Right cardiac atrium (tissue), 5 donors: ENCODE measurements at regions of chr3 and their contacts with region 1.

Region 1: DNA sequence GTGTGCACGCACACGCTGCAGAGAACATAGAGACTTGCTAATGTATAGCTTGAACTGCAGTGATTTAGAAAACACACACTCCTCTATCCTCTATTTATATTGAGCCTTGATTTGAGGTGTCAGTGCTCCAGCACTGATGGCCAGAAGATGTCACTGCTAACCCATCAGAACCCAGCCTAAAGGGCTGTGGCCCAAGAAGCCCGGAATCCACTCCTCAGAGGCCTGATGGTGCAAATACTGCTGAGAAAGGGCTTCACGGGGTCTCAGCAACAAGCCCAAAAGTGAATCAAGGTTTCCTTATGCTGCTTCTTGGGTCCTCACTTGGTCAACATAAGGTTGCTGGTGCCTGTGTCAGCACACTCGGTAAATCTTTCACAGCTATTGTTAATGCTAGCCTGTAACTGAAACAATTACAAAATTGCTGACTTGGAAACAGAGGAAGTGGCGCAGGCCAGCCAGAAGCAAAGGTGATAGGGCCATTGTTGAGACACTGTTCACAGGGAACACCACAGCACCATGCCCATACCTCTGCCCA is 60.3 kb downstream of the HEG1 start:
- DNase-seq: peak; percentile 44 to 74 (median 68)
- ATAC-seq: peak; percentile 43 to 74
- H3K4me3 ChIP-seq: no peak overlapping the region
- H3K27ac ChIP-seq: peak overlapping the region; percentile 71
- H3K4me1 ChIP-seq: peaks cover 21% of the 10 kb centered on the region
- H3K27me3 ChIP-seq: no peaks in the 10 kb centered on the region

Region 2: DNA sequence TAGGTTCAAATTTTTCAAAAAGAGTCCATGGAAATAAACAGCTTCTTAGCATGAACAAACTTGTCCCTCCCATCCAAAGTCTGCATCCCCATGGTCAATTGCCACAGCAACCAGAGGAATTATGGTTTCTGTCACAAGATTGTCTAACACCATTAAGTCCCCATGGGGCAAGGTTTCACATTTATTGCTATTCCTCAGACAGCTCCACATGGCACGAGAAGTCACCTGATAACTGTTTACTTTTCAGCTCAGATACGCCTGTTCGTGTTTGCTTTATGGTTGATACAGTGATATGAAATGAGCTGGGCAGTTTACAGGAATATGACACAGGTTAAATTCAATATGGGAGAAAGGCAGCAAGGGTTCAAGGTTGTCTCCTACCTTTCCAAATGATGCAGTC is 23.1 kb before region 1 on chr3:
- intact Hi-C with region 1: no loop called
- DNase-seq: no peak
- ATAC-seq: no peak
- H3K4me3 ChIP-seq: no peak overlapping the region
- H3K27ac ChIP-seq: no peak overlapping the region
- H3K4me1 ChIP-seq: no peaks in the 10 kb centered on the region
- H3K27me3 ChIP-seq: no peaks in the 10 kb centered on the region

Region 3: GRCh38 chr3:125042725-125043406 is 47.3 kb after region 1 on chr3:
- intact Hi-C with region 1: loop called in 1 of 4 experiments (anchors 2 kb)
- DNase-seq: peak; percentile 66 to 83 (median 82)
- ATAC-seq: peak; percentile 67 to 77
- H3K4me3 ChIP-seq: no peak overlapping the region
- H3K27ac ChIP-seq: peak overlapping the region; percentile 94
- H3K4me1 ChIP-seq: peaks cover 56% of the 10 kb centered on the region
- H3K27me3 ChIP-seq: no peaks in the 10 kb centered on the region

Region 4: GRCh38 chr3:125165189-125165947 is 169.8 kb after region 1 on chr3:
- intact Hi-C with region 1: loop called (anchors 5 to 10 kb)
- DNase-seq: peak in 2 of 3 donors; percentile 81
- ATAC-seq: peak; percentile 79 to 83
- H3K4me3 ChIP-seq: no peak overlapping the region
- H3K27ac ChIP-seq: no peak overlapping the region
- H3K4me1 ChIP-seq: peaks cover 6% of the 10 kb centered on the region
- H3K27me3 ChIP-seq: no peaks in the 10 kb centered on the region

Region 5: DNA sequence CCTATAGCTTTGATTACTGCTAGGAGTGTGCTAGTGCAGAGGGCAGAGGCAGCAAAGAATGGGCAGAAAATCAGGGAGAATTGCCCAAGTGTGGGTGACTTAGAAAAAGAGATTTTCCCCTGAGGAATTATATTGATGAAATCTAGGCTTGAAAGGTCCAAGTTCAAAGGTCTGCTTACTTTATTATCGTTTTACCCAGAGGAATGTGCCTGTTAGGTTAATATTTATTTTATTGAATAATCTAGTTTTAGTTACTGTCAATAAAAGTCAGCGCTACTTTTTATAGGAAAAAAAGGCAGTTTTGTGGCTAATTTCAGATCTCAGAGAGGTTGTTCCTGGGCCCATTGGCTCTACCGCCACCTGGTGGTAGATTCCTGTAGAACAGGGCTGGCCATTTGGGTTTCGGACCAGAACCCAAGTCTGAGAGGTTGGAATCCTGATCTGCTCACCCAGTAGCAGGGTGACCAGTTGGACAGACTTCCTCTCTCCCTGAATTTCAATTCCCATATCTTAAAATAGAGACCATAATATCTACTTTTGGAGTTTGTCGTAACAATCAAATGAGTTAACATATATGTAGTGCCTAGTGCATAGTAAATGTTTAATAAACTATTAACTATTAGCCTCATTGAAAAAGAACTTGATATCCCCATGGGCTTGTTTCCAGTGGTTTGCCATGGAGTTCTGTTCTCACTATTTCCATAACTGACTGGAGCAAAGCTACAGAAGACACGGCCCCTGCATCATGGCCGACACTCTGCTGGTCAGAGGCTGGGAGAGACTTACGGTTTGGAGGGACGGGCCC is 442.3 kb after region 1 on chr3:
- intact Hi-C with region 1: loop called in 2 of 4 experiments (anchors 5 to 10 kb)
- DNase-seq: peak; percentile 57 to 81 (median 64)
- ATAC-seq: peak; percentile 47 to 62
- H3K4me3 ChIP-seq: no peak overlapping the region
- H3K27ac ChIP-seq: no peak overlapping the region
- H3K4me1 ChIP-seq: no peaks in the 10 kb centered on the region
- H3K27me3 ChIP-seq: no peaks in the 10 kb centered on the region